Left colon (tissue), 2 donors: ENCODE measurements at regions of chr6 and their contacts with region 1.

Region 1: DNA sequence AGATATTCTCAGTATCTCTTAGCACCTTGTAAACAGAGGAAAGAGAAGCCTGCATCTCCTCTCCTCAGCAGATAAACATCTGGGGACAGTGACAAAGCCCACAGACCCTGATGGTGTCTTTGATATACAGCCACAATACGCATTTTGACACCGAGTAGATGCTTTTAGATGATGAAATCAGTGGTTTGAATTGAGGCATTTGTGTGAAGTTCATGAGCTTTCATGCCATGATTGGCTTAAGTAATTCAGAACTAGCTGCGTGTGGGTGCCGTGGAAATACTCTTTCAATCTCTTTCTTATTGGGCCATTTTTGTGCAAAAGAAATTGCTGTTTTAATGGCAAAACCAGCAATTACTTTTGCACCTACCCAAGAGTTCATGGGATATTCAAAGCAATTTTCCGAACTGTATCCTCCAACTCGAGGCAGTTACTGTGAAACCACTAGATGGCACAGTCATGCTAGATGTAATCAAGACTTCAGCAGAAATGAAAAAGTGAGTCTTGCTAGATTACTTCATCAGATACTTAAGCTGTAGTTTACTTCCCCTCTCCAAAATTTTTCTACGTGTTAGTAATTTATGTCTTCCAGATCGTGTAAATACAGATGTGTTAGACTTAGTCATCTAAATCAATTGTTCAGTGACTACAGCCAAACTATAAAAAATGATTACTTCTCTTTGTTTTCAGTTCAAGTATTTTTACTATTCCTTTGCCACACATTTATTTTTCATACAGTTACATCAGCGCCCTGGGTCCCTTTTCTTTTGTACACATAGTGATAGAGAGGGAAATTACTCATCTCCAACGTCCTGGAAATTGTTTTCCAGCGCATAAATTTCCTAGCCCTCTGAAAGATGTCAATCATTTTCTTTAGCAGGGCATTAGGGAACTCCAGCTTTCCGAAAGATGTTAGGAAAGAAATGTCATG is 49.4 kb downstream of the IYD start:
- DNase-seq: no peak
- ATAC-seq: peak; percentile 87

Region 2: GRCh38 chr6:150600301-150601017 is 182.3 kb after region 1 on chr6:
- intact Hi-C with region 1: loop called in 1 of 2 experiments (anchors 5 kb)
- DNase-seq: peak; percentile 80 to 85
- ATAC-seq: peak; percentile 57